Activated CD8-positive, alpha-beta T cell treated with anti-CD3 and anti-CD28 coated beads, Interleukin-2, amount 10 ng/mL, durations not matched to agents 7 days and 5 days (primary cell): ENCODE measurements at regions of chr17 and their contacts with region 1.

Region 1: DNA sequence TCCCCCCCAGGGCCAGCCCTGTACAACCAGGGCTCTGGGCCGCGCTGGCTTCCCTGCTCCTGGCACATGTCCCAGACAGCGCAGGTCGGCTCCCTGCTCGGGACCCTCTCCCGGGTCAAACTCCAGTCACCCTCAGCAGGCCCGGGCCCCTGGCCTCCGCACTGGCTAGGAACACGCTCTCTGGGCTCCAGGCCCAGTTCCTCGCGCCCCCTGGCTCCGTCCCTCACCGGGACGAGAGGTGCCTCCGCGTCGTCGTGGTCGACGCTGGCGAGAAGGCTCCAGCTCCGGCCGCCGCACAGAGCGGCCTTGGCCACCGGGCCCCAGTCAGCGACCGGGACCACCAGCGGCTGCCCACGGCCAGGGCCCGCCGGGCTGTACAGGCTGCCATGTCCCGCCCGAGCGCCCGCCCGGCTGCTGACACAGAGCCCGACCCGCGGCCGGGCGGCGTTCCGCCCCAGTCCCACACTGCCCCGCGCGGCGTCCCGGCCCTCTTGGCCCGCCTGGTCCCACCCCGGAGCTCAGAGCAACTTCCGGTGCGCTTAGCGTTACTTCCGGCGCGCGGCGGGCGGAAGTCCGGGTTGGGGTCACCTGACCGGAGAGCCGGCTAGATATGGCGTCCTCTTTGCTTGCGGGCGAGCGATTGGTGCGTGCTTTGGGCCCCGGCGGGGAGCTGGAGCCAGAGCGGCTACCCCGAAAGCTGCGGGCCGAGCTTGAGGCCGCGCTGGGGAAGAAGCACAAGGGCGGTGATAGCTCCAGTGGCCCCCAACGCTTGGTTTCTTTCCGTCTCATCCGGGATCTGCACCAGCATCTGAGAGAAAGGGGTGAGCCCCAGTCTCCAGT is at the start of gene POLDIP2:
- DNase-seq: peak; percentile 97
- ATAC-seq: peak; percentile 99
- H3K4me3 Mint-ChIP-seq: peak within 1 kb of the TSS; percentile 97
- H3K27ac Mint-ChIP-seq: peak within 1 kb of the TSS; percentile 97
- H3K4me1 Mint-ChIP-seq: peaks cover 36% of the 10 kb centered on the region
- H3K27me3 Mint-ChIP-seq: no peaks in the 10 kb centered on the region
- total RNA-seq, gene POLDIP2: 68.1 to 73.9 TPM

Region 2: DNA sequence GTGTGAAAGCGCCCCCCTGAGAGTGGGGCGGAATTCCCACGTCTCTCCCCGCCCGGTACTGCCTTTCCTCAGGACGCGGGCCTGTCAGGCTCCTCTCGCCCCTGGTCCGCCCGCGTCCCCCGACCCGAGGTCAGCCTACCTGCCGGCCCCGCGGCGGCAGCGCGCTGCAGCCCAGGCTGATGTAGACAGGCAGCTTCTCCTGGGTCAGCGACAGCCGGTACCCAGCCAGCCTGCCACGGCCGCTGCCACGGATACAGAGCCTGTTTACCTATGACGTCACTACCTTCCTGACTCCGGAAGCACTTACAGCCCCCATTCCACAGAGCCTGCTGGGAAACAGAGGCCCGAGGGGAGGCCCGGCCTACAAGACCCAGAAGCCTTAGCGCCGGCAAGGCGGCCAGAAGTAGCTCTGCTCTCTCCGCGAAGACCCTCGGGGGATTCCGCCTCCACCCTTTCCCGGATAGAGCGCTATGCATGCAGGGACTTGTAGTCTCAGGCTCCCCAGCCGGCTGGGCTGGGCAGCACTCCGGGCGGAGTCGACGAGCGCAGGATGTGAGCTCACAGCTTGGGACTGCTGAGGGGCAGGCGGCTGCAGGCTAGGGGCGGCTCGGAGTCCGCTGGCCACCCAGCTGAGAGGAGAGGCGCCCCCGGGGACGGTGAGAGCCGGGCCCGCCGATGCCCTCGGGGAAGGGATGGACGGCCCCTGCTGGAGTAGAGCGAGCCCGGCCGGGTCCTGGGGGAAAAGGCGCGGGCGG is 21.9 kb before region 1 on chr17 and contains the starts of genes IFT20 and TNFAIP1:
- CTCF ChIA-PET with region 1: interaction called, 17 read pairs
- POLR2A ChIA-PET with region 1: interaction called, 47 read pairs
- DNase-seq: peak; percentile 99
- ATAC-seq: peak; percentile 97
- H3K4me3 Mint-ChIP-seq: peak within 1 kb of the TSS; percentile 96
- H3K27ac Mint-ChIP-seq: peak within 1 kb of the TSS; percentile 95
- H3K4me1 Mint-ChIP-seq: peaks cover 31% of the 10 kb centered on the region
- H3K27me3 Mint-ChIP-seq: no peaks in the 10 kb centered on the region
- total RNA-seq, gene IFT20: 20.7 to 22.7 TPM
- total RNA-seq, gene TNFAIP1: 16.3 to 19.7 TPM

Region 3: GRCh38 chr17:28371245-28372202 is 14.2 kb after region 1 on chr17 and contains the start of gene SARM1:
- CTCF ChIA-PET with region 1: interaction called, 6 read pairs
- POLR2A ChIA-PET with region 1: interaction called, 45 read pairs
- DNase-seq: peak; percentile 93
- ATAC-seq: peak; percentile 94
- H3K4me3 Mint-ChIP-seq: peak within 1 kb of the TSS; percentile 87
- H3K27ac Mint-ChIP-seq: peak within 1 kb of the TSS; percentile 85
- H3K4me1 Mint-ChIP-seq: peaks cover 21% of the 10 kb centered on the region
- H3K27me3 Mint-ChIP-seq: no peaks in the 10 kb centered on the region
- total RNA-seq, gene SARM1: 16.2 to 20.0 TPM

Region 4: GRCh38 chr17:28392491-28392890 is 35.2 kb after region 1 on chr17:
- CTCF ChIA-PET with region 1: no interaction called
- POLR2A ChIA-PET with region 1: no interaction called
- DNase-seq: no peak
- ATAC-seq: no peak
- H3K4me3 Mint-ChIP-seq: no peak overlapping the region
- H3K27ac Mint-ChIP-seq: no peak overlapping the region
- H3K4me1 Mint-ChIP-seq: peaks cover 5% of the 10 kb centered on the region
- H3K27me3 Mint-ChIP-seq: no peaks in the 10 kb centered on the region